Ascending aorta (tissue), 2 donors: ENCODE measurements at regions of chrX and their contacts with region 1.

Region 1: DNA sequence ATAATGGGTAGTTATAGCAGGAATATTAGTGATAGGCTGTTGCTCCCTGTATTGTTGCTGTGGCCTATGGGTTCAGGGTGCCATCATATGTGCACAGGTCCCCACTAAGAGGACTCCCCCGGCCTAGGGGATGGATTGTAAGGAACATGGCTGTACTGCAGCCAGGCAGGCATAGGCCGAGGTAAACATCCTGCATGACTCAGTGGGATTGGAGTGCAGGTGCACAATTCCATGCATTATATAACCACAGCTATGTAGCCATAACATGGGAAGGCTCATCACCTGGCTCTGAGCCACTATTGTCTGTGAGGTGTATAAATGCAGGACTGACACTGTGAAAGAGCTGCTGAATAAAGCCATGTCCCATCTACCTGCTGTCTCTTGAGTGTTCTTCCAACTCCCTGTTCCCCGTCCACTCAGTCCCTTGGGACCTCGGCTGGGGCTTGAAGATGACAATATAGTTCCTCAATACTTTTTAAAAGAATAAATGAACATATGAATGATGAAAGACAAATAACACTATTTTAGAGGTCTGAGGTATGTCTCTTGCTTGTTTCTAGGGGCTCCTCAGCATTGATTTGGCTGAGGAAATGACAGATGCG is 425.2 kb downstream of the IDS start:
- DNase-seq: no peak
- H3K4me3 ChIP-seq: no peak overlapping the region
- H3K27ac ChIP-seq: no peak overlapping the region
- H3K4me1 ChIP-seq: no peaks in the 10 kb centered on the region
- H3K27me3 ChIP-seq: no peaks in the 10 kb centered on the region
- CTCF ChIP-seq: no peak

Region 2: DNA sequence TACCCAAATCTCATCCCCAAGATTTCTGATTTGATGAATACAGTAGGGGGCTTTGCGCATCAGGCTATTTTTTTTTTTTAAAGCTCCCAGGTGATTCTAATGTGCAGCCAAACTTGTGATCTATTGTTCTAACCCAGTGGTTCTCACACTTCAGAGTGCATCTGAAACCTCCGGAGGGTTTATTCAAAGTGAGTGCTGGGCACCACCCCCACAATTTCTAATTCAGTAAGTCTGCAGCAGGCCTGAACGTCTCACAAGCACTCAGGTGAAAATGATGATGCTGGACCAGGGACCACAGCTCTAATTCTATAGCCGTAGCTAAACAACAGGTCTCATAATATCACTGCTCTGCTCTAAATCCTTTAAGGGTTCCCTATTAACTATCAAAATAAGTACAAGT is 887.4 kb before region 1 on chrX:
- intact Hi-C with region 1: loop called (anchors 5 kb)
- DNase-seq: no peak
- H3K4me3 ChIP-seq: no peak overlapping the region
- H3K27ac ChIP-seq: no peak overlapping the region
- H3K4me1 ChIP-seq: no peaks in the 10 kb centered on the region
- H3K27me3 ChIP-seq: no peaks in the 10 kb centered on the region
- CTCF ChIP-seq: no peak

Region 3: GRCh38 chrX:148928811-148929210 is 151.1 kb before region 1 on chrX:
- intact Hi-C with region 1: no loop called
- DNase-seq: no peak
- H3K4me3 ChIP-seq: no peak overlapping the region
- H3K27ac ChIP-seq: no peak overlapping the region
- H3K4me1 ChIP-seq: no peaks in the 10 kb centered on the region
- H3K27me3 ChIP-seq: no peaks in the 10 kb centered on the region
- CTCF ChIP-seq: no peak